ENCODE measurements at regions of chr11 and their contacts with region 1.

Region 1: DNA sequence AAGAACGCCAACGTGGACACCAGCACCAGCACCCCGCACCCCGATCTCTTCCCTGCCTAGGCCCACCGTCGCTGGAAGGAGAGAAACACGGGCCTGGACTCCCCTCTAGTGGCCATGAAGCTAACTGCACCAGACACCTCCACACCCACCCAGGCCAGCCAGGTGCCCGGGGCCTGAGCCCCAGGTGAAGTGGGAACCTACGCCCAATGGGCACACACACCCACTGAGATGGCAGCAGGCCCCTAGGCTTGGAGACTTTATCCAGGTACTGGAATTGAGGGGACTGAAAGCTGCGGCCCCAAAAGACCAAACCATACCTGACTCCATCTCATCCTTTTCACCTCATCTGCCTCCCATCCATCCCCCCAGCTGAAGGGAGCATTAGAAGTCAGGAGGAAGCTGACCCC is 81.0 kb downstream of the BUD13 start:
- DNase-seq: peak; percentile 21 to 64 (median 34)
- H3K4me3 ChIP-seq: no peak overlapping the region
- H3K4me3 Mint-ChIP-seq: no peak overlapping the region
- H3K27ac ChIP-seq: no peak overlapping the region
- H3K27ac Mint-ChIP-seq: peak overlapping the region in 1 of 8 donors; percentile 19
- H3K4me1 ChIP-seq: no peaks in the 10 kb centered on the region
- H3K4me1 Mint-ChIP-seq: peaks cover 0 to 4% (median 0%) of the 10 kb centered on the region in 3 donors
- H3K27me3 ChIP-seq: peaks cover 3% of the 10 kb centered on the region
- H3K27me3 Mint-ChIP-seq: peaks cover 5 to 20% of the 10 kb centered on the region in 2 donors

Region 2: DNA sequence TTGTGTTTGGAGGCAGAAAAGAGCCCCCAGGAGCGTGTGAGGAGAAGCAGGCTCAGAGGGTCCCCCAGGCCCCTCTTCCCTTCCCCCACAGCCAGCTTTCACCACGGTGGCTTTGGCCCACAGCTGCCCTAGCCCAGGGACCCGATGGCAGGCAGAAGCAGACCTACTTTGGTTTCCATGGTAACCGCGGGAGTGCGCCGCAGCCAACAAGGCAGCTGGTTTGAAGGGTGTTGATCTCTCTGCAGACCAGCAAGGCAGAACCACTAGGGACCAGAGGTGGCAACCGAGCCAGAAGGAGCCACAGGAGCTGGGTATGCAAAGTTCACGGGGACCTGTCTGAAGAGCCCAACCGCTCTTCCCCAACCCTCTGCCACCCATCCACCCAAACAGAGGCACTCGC is 11.6 kb after region 1 on chr11:
- CTCF ChIA-PET with region 1: interaction called, 12 read pairs
- POLR2A ChIA-PET with region 1: no interaction called
- DNase-seq: peak in 1 of 5 donors; percentile 15
- H3K4me3 ChIP-seq: no peak overlapping the region
- H3K4me3 Mint-ChIP-seq: peak overlapping the region in 1 of 7 donors; percentile 17
- H3K27ac ChIP-seq: no peak overlapping the region
- H3K27ac Mint-ChIP-seq: peak overlapping the region in 7 of 8 donors; percentile 47 to 96 (median 84)
- H3K4me1 ChIP-seq: no peaks in the 10 kb centered on the region
- H3K4me1 Mint-ChIP-seq: peaks cover 0 to 6% (median 4%) of the 10 kb centered on the region in 3 donors
- H3K27me3 ChIP-seq: no peaks in the 10 kb centered on the region
- H3K27me3 Mint-ChIP-seq: peaks cover 6 to 23% of the 10 kb centered on the region in 2 donors